Activated CD4-positive, alpha-beta T cell treated with anti-CD3 and anti-CD28 coated beads, Interleukin-2, amount 10 ng/mL, durations not matched to agents 24 days and 14 days (primary cell): ENCODE measurements at regions of chr16 and their contacts with region 1.

Region 1: GRCh38 chr16:50160495-50161164 is 7.5 kb downstream of the TENT4B start:
- DNase-seq: no peak
- H3K4me3 Mint-ChIP-seq: no peak overlapping the region
- H3K27ac Mint-ChIP-seq: peak overlapping the region; percentile 32
- H3K4me1 Mint-ChIP-seq: peaks cover 45% of the 10 kb centered on the region
- H3K27me3 Mint-ChIP-seq: no peaks in the 10 kb centered on the region

Region 2: DNA sequence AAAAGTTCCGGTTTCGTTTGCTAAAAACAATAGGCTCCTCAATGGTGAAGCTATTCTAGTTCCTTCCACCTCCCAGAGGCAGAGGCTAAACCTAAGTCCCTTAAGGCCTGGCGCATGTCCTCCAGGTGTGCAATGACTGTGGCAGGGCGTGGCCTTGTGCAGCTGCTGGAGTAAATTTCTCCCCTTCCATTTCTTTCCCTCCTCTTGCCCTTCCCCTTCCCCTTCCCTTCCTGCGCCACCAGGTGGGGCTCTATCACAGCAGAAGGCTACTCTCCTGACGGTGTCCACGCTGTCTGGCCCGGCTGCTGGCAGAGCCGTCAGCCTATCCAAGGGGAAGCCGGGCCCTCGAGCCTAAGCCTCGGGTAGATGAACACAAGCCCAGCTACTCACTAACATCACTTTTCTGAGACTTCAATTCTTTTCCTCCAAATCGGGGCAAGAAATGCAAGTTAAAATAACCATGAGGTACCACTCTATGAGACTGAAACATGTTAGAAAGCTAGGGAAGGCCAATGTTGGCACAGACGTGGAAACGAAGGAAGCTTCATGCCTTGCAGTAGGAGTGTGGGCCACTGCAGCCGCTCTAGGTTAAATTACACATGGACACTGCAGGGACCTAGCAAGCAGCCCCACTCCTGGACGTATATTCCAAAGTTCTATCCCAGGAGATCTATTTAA is 752.6 kb before region 1 on chr16:
- intact Hi-C with region 1: no loop called
- DNase-seq: peak; percentile 89
- H3K4me3 Mint-ChIP-seq: no peak overlapping the region
- H3K27ac Mint-ChIP-seq: no peak overlapping the region
- H3K4me1 Mint-ChIP-seq: peaks cover 3% of the 10 kb centered on the region
- H3K27me3 Mint-ChIP-seq: peaks cover 3% of the 10 kb centered on the region

Region 3: GRCh38 chr16:50121721-50122445 is 38.7 kb before region 1 on chr16:
- intact Hi-C with region 1: no loop called
- DNase-seq: peak; percentile 88
- H3K4me3 Mint-ChIP-seq: peak overlapping the region; percentile 42
- H3K27ac Mint-ChIP-seq: peak overlapping the region; percentile 83
- H3K4me1 Mint-ChIP-seq: peaks cover 41% of the 10 kb centered on the region
- H3K27me3 Mint-ChIP-seq: no peaks in the 10 kb centered on the region

Region 4: GRCh38 chr16:50195276-50195675 is 34.6 kb after region 1 on chr16:
- intact Hi-C with region 1: loop called (anchors 5 kb)
- DNase-seq: no peak
- H3K4me3 Mint-ChIP-seq: no peak overlapping the region
- H3K27ac Mint-ChIP-seq: no peak overlapping the region
- H3K4me1 Mint-ChIP-seq: peaks cover 46% of the 10 kb centered on the region
- H3K27me3 Mint-ChIP-seq: no peaks in the 10 kb centered on the region